ENCODE measurements at regions of chr1 and their contacts with region 1.

Region 1: GRCh38 chr1:235697508-235697907 is 47.9 kb upstream of the GNG4 start:
- DNase-seq: no peak
- H3K4me3 ChIP-seq: no peak overlapping the region
- H3K27ac ChIP-seq: no peak overlapping the region
- H3K4me1 ChIP-seq: no peaks in the 10 kb centered on the region
- H3K27me3 ChIP-seq: no peaks in the 10 kb centered on the region
- CTCF ChIP-seq: no peak
- POLR2A ChIP-seq: no peak

Region 2: DNA sequence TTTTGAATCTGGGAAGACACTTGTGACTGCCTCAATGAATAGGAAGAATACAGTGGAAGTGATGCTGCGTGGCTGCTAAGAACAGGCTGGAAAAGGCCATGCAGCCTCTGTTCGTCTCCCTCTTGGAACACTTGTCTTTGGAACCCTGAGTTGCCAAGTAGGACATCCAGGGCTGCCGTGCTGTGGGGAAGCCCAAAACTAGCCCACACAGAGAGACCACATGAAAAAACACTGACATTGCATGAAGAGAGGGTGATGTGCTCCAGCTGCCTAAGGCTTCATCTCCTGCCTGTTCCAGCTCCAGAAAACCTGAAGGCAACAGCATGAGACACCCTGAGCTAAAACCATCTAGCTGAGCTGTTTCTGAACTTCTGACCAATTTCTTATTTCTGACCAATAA is 13.2 kb after region 1 on chr1:
- CTCF ChIA-PET with region 1: interaction called, 6 read pairs
- POLR2A ChIA-PET with region 1: no interaction called
- dilution Hi-C with region 1: no loop called
- intact Hi-C with region 1: loop called (anchors 2 kb)
- DNase-seq: no peak
- H3K4me3 ChIP-seq: no peak overlapping the region
- H3K27ac ChIP-seq: no peak overlapping the region
- H3K4me1 ChIP-seq: no peaks in the 10 kb centered on the region
- H3K27me3 ChIP-seq: no peaks in the 10 kb centered on the region
- CTCF ChIP-seq: no peak
- POLR2A ChIP-seq: no peak

Measured in endothelial cell of umbilical vein (primary cell).